ENCODE measurements at regions of chr1 and their contacts with region 1.

Region 1: GRCh38 chr1:231918239-231919015 is 291.8 kb downstream of the DISC1 start:
- DNase-seq: peak; percentile 35 to 59 (median 48)
- H3K4me3 ChIP-seq: peak overlapping the region in 1 of 2 donors; percentile 31
- H3K4me3 Mint-ChIP-seq: peak overlapping the region; percentile 69 to 89 (median 86)
- H3K27ac ChIP-seq: peak overlapping the region; percentile 53
- H3K27ac Mint-ChIP-seq: peak overlapping the region; percentile 49 to 96 (median 92)
- H3K4me1 ChIP-seq: peaks cover 66% of the 10 kb centered on the region
- H3K4me1 Mint-ChIP-seq: peaks cover 59 to 84% (median 75%) of the 10 kb centered on the region in 4 donors
- H3K27me3 ChIP-seq: no peaks in the 10 kb centered on the region
- H3K27me3 Mint-ChIP-seq: no peaks in the 10 kb centered on the region

Region 2: GRCh38 chr1:231931846-231932454 is 13.5 kb after region 1 on chr1:
- CTCF ChIA-PET with region 1: interaction called, 45 read pairs
- POLR2A ChIA-PET with region 1: interaction called, 5 read pairs
- intact Hi-C with region 1: no loop called
- DNase-seq: peak in 2 of 5 donors; percentile 6 to 9
- H3K4me3 ChIP-seq: no peak overlapping the region
- H3K4me3 Mint-ChIP-seq: no peak overlapping the region
- H3K27ac ChIP-seq: no peak overlapping the region
- H3K27ac Mint-ChIP-seq: no peak overlapping the region
- H3K4me1 ChIP-seq: peaks cover 14% of the 10 kb centered on the region
- H3K4me1 Mint-ChIP-seq: peaks cover 18 to 39% (median 28%) of the 10 kb centered on the region in 4 donors
- H3K27me3 ChIP-seq: no peaks in the 10 kb centered on the region
- H3K27me3 Mint-ChIP-seq: no peaks in the 10 kb centered on the region

Region 3: GRCh38 chr1:233331676-233332519 is 1413.5 kb after region 1 on chr1:
- CTCF ChIA-PET with region 1: no interaction called
- POLR2A ChIA-PET with region 1: no interaction called
- intact Hi-C with region 1: no loop called
- DNase-seq: no peak
- H3K4me3 ChIP-seq: no peak overlapping the region
- H3K4me3 Mint-ChIP-seq: no peak overlapping the region
- H3K27ac ChIP-seq: no peak overlapping the region
- H3K27ac Mint-ChIP-seq: no peak overlapping the region
- H3K4me1 ChIP-seq: peaks cover 9% of the 10 kb centered on the region
- H3K4me1 Mint-ChIP-seq: peaks cover 6 to 17% (median 10%) of the 10 kb centered on the region in 4 donors
- H3K27me3 ChIP-seq: no peaks in the 10 kb centered on the region
- H3K27me3 Mint-ChIP-seq: peaks cover 4 to 5% of the 10 kb centered on the region in 2 donors

Measured in CD4-positive, alpha-beta memory T cell (primary cell).